Mammary epithelial cell (primary cell): ENCODE measurements at regions of chrX and their contacts with region 1.

Region 1: DNA sequence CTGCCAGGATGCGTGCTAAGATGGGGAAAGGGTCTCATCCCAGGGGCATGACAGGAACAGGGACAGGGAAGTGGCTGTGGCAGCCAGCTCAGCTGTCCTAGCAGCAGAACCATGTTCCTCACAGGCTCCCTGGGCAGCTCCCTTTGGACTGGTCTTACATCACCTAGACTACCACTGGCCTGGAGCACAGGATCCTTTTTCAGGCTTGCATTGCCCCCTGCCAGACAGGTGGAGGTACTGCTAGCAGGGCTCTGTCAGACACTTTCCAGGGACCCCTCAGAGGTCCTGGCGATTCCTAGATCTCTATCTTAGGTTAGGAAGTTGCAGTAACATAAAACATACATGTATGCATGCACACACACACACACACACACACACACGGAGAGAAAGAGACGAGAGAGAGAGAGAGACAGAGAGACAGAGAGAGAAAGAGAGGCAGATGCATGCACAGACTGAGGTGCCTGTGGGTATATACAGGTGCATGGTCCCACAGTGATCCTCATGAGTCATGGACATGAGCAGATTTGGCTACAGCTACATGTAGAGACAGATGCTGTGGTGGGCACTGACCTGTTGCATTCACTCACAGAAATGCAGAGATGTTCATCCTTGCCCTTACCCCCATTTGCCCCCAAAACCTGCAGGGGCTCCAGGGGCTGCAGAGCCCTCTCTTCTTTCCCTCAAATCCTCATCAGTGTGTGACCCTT is 63.6 kb downstream of the STARD8 start:
- DNase-seq: peak; percentile 25
- H3K4me3 ChIP-seq: no peak overlapping the region
- H3K27ac ChIP-seq: no peak overlapping the region
- H3K4me1 ChIP-seq: no peaks in the 10 kb centered on the region
- H3K27me3 ChIP-seq: no peaks in the 10 kb centered on the region
- CTCF ChIP-seq: peak; percentile 61 to 75

Region 2: DNA sequence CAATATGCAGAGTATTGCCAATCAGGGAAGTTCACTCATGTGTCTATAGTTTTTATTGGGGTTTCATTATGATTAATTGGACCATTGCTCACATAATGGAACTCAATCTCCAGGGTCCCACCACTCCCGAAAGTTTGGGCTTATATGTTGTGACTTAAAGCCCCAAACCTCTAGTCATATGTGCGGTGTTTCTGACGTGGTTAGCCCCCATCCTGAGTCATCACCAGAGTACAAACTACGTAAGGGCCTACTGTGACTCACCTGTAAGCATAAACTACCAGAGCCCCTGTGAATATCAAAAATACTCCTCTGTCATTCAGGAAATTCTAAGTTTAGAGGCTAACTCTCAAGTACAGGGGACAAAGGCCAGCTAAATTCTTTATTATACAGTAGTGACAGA is 206.8 kb before region 1 on chrX:
- CTCF ChIA-PET with region 1: no interaction called
- dilution Hi-C with region 1: no loop called
- in situ Hi-C with region 1: loop called (anchors 5 to 10 kb)
- intact Hi-C with region 1: no loop called
- DNase-seq: peak; percentile 68
- H3K4me3 ChIP-seq: no peak overlapping the region
- H3K27ac ChIP-seq: peak overlapping the region; percentile 71
- H3K4me1 ChIP-seq: peaks cover 16% of the 10 kb centered on the region
- H3K27me3 ChIP-seq: no peaks in the 10 kb centered on the region
- CTCF ChIP-seq: no peak

Region 3: GRCh38 chrX:68511255-68511654 is 199.8 kb before region 1 on chrX:
- CTCF ChIA-PET with region 1: no interaction called
- dilution Hi-C with region 1: no loop called
- in situ Hi-C with region 1: loop called (anchors 5 to 10 kb)
- intact Hi-C with region 1: loop called (anchors 1 kb)
- DNase-seq: peak; percentile 32
- H3K4me3 ChIP-seq: no peak overlapping the region
- H3K27ac ChIP-seq: no peak overlapping the region
- H3K4me1 ChIP-seq: no peaks in the 10 kb centered on the region
- H3K27me3 ChIP-seq: no peaks in the 10 kb centered on the region
- CTCF ChIP-seq: peak; percentile 85 to 86